Naive thymus-derived CD8-positive, alpha-beta T cell (primary cell): ENCODE measurements at regions of chr13 and their contacts with region 1.

Region 1: GRCh38 chr13:99176309-99177276 is 24.1 kb upstream of the UBAC2 start:
- DNase-seq: peak; percentile 56 to 88 (median 78)
- ATAC-seq: peak; percentile 85 to 91
- H3K4me3 Mint-ChIP-seq: peak overlapping the region; percentile 54 to 80 (median 75)
- H3K27ac Mint-ChIP-seq: peak overlapping the region; percentile 65 to 89 (median 82)
- H3K4me1 Mint-ChIP-seq: peaks cover 36 to 60% (median 54%) of the 10 kb centered on the region in 4 donors
- H3K27me3 Mint-ChIP-seq: peaks cover 0 to 4% (median 0%) of the 10 kb centered on the region in 5 donors

Region 2: DNA sequence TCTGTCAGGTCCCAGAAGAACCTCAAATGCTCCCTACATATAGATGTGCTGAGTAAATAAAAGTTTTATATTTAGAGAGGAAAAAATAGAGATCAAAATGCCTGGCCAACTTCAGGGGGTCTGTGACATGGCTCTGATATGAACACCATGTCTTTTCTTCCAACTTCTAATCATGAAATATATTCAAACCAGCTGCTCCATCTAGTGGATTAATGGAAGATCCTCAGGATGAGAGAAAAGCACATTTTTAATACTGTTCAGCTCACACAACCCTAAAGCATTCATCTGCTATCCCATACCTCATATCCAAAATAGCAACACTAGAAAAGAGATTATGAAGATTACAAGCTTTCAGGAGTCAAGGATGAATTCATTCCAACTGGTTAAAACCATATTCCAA is 142.8 kb before region 1 on chr13:
- POLR2A ChIA-PET with region 1: no interaction called
- DNase-seq: peak in 2 of 10 donors; percentile 39 to 46
- ATAC-seq: peak; percentile 73 to 79
- H3K4me3 Mint-ChIP-seq: no peak overlapping the region
- H3K27ac Mint-ChIP-seq: peak overlapping the region in 8 of 10 donors; percentile 7 to 71 (median 46)
- H3K4me1 Mint-ChIP-seq: peaks cover 20 to 49% (median 40%) of the 10 kb centered on the region in 4 donors
- H3K27me3 Mint-ChIP-seq: peaks cover 0 to 12% (median 0%) of the 10 kb centered on the region in 5 donors

Region 3: GRCh38 chr13:99264051-99264450 is 87.5 kb after region 1 on chr13:
- POLR2A ChIA-PET with region 1: interaction called, 11 read pairs
- DNase-seq: no peak
- ATAC-seq: peak; percentile 52 to 56
- H3K4me3 Mint-ChIP-seq: peak overlapping the region in 8 of 10 donors; percentile 11 to 45 (median 30)
- H3K27ac Mint-ChIP-seq: peak overlapping the region; percentile 84 to 99 (median 91)
- H3K4me1 Mint-ChIP-seq: peaks cover 36 to 73% (median 72%) of the 10 kb centered on the region in 4 donors
- H3K27me3 Mint-ChIP-seq: no peaks in the 10 kb centered on the region